ENCODE measurements at regions of chr15 and their contacts with region 1.

Region 1: DNA sequence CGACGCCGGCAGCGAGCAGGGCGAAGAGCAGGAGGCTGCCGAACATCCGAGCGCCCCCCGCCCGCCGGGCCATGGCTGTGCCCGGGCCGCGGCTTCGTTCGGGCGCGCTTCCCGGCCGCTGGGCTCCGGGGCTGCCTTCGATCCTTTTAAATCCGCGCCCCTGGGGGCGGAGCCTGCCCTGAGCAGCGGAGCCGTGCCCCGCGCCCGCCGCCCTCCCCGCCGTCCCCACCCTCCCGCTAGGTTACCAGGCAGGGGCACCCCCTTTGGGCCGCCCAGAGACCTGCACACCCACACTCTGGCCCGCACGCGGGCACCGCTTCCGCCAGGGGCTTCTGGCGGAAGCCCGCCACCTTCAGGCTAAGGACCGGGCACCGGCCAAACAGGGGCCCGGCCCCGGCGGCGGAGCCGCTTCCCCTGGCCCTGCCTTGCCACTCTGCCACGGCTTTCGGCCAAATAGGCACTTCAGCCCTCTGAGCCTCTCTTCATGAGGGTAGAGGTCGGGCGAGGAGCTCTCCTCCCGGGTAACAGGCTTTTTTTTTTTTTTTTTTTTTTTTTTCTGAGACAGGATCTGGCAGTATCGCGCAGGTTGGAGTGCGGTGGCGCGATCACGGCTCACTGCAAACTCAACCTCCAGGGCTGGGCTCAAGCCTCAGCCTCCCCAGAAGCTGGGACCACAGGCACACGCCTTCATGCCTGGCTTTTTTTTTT is at the start of gene NMB:
- DNase-seq: peak; percentile 95 to 97
- H3K4me3 ChIP-seq: peak within 1 kb of the TSS in 2 of 3 donors; percentile 42 to 57
- H3K27ac ChIP-seq: peak within 1 kb of the TSS; percentile 76 to 86 (median 84)
- H3K4me1 ChIP-seq: peaks cover 24 to 49% of the 10 kb centered on the region in 2 donors
- H3K27me3 ChIP-seq: no peaks in the 10 kb centered on the region
- CTCF ChIP-seq: peak in 5 of 6 experiments; percentile 36 to 70 (median 58)
- POLR2A ChIP-seq: peak in 1 of 2 donors; percentile 77
- total RNA-seq, gene NMB: 12.9 to 43.4 (median 23.5) TPM

Region 2: DNA sequence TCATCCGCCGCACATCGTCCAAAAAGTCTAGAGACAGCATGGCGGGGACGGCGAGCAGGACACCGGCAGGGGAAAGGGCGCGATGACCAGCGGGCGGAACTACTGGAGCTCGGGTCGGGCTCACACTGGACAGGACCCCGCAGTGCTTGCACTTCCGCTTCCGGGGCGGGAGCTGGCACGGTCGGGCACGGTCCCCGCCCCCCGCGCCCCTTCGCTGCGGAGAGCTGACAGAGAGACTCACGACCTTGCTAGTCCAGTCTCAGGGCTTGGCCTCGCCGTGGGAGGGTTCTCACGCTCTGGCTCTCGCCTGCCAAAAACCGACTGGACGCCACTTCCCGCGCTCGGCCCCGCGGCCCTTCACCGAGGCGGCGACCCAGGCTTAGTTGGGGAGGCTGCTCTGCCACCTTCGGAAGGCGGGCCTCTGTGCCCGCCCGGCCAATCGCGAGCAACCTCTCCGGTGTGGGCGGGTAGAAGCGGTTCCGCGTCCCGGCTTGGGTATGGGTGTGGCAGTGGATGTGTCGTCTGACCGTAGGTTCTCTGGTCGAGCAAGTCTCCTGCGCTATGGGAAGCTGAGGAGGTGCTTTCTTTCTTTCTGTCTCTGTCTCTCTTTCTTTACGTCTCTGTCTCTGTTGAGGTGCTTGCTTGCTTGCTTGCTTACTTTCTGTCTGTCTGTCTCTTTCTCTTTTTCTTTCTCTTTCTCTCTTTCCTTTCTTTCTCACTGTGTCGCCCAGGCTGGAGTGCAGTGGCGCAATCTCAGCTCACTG is 58.0 kb after region 1 on chr15 and contains the start of gene SEC11A:
- intact Hi-C with region 1: loop called (anchors 5 kb)
- DNase-seq: peak; percentile 96 to 97
- H3K4me3 ChIP-seq: peak within 1 kb of the TSS; percentile 68 to 94 (median 76)
- H3K27ac ChIP-seq: peak within 1 kb of the TSS; percentile 82 to 89 (median 87)
- H3K4me1 ChIP-seq: peaks cover 16% of the 10 kb centered on the region in 2 donors
- H3K27me3 ChIP-seq: no peaks in the 10 kb centered on the region
- CTCF ChIP-seq: no peak
- POLR2A ChIP-seq: peak; percentile 19 to 91
- total RNA-seq, gene SEC11A: 170 to 304 (median 182) TPM

Region 3: DNA sequence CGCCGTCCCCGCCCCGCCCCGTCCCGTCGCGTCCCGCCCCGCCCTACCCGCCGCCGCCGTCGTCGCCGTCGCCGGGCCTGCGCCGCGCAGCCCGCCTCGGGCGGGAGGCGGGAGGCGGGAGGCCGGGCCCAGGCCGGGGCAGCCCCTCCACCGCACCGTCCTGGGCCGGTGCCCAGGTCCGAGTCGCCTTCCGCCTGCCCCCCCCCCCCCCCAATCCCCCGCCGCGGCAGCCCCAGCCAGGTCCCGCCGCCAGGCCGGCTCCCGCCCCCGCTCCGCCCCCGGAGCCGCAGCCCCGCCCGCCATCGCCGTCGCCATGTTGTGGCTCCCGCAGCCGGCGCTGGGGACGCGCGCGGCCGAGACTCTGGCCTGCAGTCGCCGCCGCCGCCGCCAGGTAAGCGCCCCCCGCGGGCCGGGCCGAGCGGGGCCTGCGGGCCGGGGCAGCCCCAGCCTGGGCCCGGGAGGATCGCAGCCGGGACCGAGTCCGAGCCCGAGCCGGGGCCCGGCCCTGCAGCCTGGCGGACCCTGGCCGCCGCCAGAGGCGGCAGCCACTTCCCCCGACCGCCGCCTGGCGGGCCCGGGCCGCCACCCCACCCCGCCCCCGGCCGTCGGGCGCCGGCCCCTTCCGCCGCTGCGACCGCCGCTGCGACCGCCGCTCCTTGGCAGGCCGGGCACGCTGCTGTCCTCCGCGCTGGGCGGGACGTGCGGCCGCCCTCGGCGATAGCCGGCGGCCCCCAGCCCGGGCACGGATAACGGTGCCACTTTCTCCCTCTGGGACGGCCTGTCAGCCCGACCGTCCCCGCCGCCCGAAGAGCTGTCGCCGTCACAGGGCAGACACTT is 90.3 kb after region 1 on chr15 and contains the start of gene ZNF592:
- intact Hi-C with region 1: loop called (anchors 10 kb)
- DNase-seq: peak; percentile 85 to 86
- H3K4me3 ChIP-seq: peak within 1 kb of the TSS; percentile 75 to 97 (median 96)
- H3K27ac ChIP-seq: peak within 1 kb of the TSS; percentile 98 to 100 (median 99)
- H3K4me1 ChIP-seq: peaks cover 25 to 46% of the 10 kb centered on the region in 2 donors
- H3K27me3 ChIP-seq: no peaks in the 10 kb centered on the region
- CTCF ChIP-seq: peak in 3 of 6 experiments; percentile 63 to 70 (median 68)
- POLR2A ChIP-seq: peak; percentile 39 to 74
- total RNA-seq, gene ZNF592: 18.3 to 28.0 (median 21.2) TPM